ENCODE measurements at regions of chr2 and their contacts with region 1.

Region 1: GRCh38 chr2:65396348-65397026 is 35.9 kb downstream of the SPRED2 start:
- DNase-seq: peak; percentile 57
- ATAC-seq: peak; percentile 91
- H3K4me3 ChIP-seq: no peak overlapping the region
- H3K27ac ChIP-seq: no peak overlapping the region
- H3K4me1 ChIP-seq: peaks cover 11% of the 10 kb centered on the region
- H3K27me3 ChIP-seq: no peaks in the 10 kb centered on the region
- CTCF ChIP-seq: no peak
- POLR2A ChIP-seq: no peak
- RAD21 ChIP-seq: no peak

Region 2: GRCh38 chr2:65350684-65351083 is 45.8 kb before region 1 on chr2:
- CTCF ChIA-PET with region 1: no interaction called
- POLR2A ChIA-PET with region 1: interaction called, 10 read pairs
- dilution Hi-C with region 1: no loop called
- in situ Hi-C with region 1: no loop called
- intact Hi-C with region 1: no loop called
- DNase-seq: no peak
- ATAC-seq: 0 out of 2 replicates have a peak, but pooled peaks have one; percentile 33
- H3K4me3 ChIP-seq: no peak overlapping the region
- H3K27ac ChIP-seq: no peak overlapping the region
- H3K4me1 ChIP-seq: peaks cover 18% of the 10 kb centered on the region
- H3K27me3 ChIP-seq: no peaks in the 10 kb centered on the region
- CTCF ChIP-seq: peak; percentile 22; the same call in 1 of the 2 replicates
- POLR2A ChIP-seq: no peak
- RAD21 ChIP-seq: no peak